CD4-positive, alpha-beta memory T cell (primary cell): ENCODE measurements at regions of chr14 and their contacts with region 1.

Region 1: DNA sequence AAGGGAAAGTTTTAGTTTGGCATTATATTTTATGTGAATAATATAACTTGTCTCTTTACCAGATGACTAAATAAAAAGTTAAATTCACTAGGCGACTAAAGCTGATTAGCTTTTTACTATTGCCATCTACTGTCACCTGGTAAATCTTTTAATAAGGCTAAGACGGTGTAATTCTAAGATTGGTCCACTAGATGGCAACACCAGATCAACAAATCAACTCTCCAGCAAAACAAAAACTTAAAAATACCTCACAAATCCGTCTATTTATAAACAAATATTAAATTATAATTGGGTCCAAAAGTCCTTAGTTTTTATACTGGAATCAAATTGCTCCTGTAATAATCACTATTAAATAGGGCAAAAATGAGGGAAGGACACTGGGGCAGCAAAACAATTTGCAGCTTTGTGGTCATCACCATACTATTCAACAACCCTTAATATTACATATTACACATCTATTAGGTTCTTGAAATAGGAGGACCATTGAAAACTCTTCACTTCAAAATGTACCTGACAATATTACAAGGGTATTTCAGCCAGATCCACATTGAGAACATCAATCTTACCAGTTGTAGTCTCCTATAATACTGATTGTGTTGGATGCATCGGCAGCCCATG is 47.9 kb downstream of the GALC start:
- DNase-seq: peak in 4 of 5 donors; percentile 49 to 56 (median 53)
- H3K4me3 ChIP-seq: no peak overlapping the region
- H3K4me3 Mint-ChIP-seq: no peak overlapping the region
- H3K27ac ChIP-seq: no peak overlapping the region
- H3K27ac Mint-ChIP-seq: no peak overlapping the region
- H3K4me1 ChIP-seq: peaks cover 13% of the 10 kb centered on the region
- H3K4me1 Mint-ChIP-seq: peaks cover 7 to 18% (median 12%) of the 10 kb centered on the region in 4 donors
- H3K27me3 ChIP-seq: no peaks in the 10 kb centered on the region
- H3K27me3 Mint-ChIP-seq: no peaks in the 10 kb centered on the region

Region 2: DNA sequence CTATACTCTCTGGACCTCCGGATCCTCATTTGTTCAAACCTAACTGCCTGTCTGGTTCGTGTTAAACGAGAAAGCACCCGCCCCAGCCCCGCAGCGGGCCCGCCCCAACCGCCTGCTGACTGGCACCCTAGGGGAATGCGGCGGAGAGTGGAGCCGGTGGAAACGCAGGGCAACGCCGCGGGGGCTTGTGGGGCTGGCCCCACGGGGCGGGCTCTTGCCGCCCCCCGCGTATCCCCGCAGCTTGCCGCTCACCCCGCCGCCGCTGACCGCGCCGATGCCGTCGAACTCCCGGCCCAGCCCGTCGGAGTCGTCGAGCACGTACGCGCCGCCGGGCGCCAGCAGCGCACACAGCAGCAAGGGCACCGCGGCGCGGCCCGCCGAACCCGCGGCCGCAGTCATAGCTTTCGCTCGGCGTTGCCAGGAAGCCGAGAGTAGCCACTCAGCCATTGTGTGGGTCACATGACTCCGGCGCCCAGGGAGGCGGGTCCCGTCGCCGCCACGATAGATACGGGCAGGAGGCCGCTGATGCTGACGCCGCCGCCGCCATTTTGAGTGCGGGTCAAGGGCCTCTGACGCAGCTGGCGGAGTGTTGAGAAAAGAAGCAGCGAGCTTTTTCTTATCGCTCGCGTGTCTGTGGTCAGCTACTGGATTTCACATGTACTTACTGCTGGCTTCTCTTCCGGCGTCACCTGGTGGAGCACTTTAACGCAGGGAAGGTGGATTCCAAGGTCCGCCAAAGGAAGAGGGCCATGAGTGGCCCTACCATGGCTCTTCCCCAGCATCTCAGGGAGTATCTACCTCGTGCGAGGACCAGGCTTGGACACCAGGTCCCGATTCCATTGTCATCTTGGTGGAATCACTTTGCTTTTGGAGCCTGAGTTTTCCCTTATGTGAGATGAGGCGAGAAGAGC is 47.9 kb after region 1 on chr14 and contains the start of gene GALC:
- CTCF ChIA-PET with region 1: interaction called, 33 read pairs
- POLR2A ChIA-PET with region 1: interaction called, 136 read pairs
- intact Hi-C with region 1: loop called (anchors 5 kb)
- DNase-seq: peak; percentile 95 to 97 (median 95)
- H3K4me3 ChIP-seq: peak within 1 kb of the TSS; percentile 58 to 80
- H3K4me3 Mint-ChIP-seq: peak within 1 kb of the TSS; percentile 91 to 99 (median 97)
- H3K27ac ChIP-seq: peak within 1 kb of the TSS; percentile 93
- H3K27ac Mint-ChIP-seq: peak within 1 kb of the TSS; percentile 98 to 100 (median 99)
- H3K4me1 ChIP-seq: peaks cover 61% of the 10 kb centered on the region
- H3K4me1 Mint-ChIP-seq: peaks cover 48 to 78% (median 62%) of the 10 kb centered on the region in 4 donors
- H3K27me3 ChIP-seq: no peaks in the 10 kb centered on the region
- H3K27me3 Mint-ChIP-seq: no peaks in the 10 kb centered on the region
- total RNA-seq, gene GALC: 26.6 to 28.7 TPM

Region 3: DNA sequence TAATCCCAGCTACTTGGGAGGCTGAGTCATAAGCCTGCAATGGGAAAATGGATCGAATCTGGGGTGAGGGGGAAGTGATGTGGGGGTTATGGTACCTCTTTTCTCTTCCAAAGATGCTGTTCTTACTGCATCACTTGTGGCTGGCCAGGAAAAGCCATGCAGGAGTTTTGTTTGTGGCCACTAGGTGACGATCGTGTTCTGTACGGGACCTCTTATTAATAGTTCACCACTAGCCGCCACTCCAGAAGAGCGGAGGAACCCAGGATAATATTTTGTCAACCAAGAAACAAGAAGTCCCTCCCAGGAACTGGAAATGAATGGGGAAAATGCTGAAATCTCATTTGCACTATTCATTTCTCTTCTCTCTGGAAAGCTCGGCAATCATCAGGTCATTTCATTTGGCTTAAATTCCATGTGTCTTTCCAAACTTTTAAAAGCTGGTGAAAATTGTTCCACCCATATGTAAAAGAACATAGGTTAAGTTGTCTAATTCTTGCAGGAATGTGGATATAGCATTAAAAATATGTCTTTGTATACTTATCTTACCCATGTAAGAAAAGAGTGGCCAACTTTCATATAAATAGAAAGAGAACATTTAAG is 68.8 kb after region 1 on chr14:
- CTCF ChIA-PET with region 1: interaction called, 52 read pairs
- POLR2A ChIA-PET with region 1: no interaction called
- intact Hi-C with region 1: no loop called
- DNase-seq: peak in 4 of 5 donors; percentile 29 to 46 (median 38)
- H3K4me3 ChIP-seq: no peak overlapping the region
- H3K4me3 Mint-ChIP-seq: peak overlapping the region in 6 of 8 donors; percentile 3 to 69 (median 44)
- H3K27ac ChIP-seq: no peak overlapping the region
- H3K27ac Mint-ChIP-seq: peak overlapping the region; percentile 9 to 91 (median 65)
- H3K4me1 ChIP-seq: peaks cover 59% of the 10 kb centered on the region
- H3K4me1 Mint-ChIP-seq: peaks cover 49 to 77% (median 64%) of the 10 kb centered on the region in 4 donors
- H3K27me3 ChIP-seq: no peaks in the 10 kb centered on the region
- H3K27me3 Mint-ChIP-seq: no peaks in the 10 kb centered on the region

Region 4: DNA sequence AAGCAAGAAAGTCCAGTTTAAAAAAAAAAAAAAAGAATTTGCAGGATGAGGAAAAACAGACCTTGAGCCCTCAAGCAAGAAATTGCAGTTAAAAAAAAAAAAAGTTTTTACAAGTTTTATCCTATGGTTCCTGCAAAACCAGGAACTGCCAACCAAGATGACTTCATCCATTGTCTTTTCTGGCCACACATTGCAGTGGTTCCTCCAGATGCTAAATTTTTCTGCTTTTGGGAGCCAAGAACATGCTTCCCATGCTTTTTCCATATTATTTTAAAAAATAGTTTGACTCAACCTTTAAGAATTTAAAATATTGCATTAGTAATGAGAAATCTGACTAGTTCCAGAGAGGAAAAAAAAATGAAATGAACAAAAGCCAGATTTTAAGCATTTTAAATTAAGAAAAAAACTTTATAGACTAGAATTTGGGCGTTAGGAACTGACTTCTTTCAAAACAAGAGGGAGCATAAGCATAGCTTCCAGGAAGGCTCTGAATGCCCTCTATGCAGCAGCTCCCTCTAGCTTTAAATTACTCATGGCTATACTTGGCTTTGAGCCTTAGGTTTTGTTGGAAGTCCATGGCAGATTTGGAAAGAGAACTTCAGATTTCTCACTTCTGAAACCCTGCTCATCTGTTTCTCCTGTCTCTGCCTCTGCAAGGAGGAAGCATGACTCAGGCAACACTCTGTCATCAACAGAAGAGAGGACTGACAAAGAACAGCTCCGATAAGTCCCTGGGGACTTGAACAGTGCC is 184.4 kb after region 1 on chr14:
- CTCF ChIA-PET with region 1: interaction called, 10 read pairs
- POLR2A ChIA-PET with region 1: no interaction called
- intact Hi-C with region 1: no loop called
- DNase-seq: no peak
- H3K4me3 ChIP-seq: no peak overlapping the region
- H3K4me3 Mint-ChIP-seq: peak overlapping the region in 7 of 8 donors; percentile 5 to 72 (median 55)
- H3K27ac ChIP-seq: no peak overlapping the region
- H3K27ac Mint-ChIP-seq: peak overlapping the region in 6 of 7 donors; percentile 60 to 85 (median 76)
- H3K4me1 ChIP-seq: peaks cover 32% of the 10 kb centered on the region
- H3K4me1 Mint-ChIP-seq: peaks cover 17 to 36% (median 24%) of the 10 kb centered on the region in 4 donors
- H3K27me3 ChIP-seq: no peaks in the 10 kb centered on the region
- H3K27me3 Mint-ChIP-seq: peaks cover 4 to 11% of the 10 kb centered on the region in 2 donors

Region 5: GRCh38 chr14:88189417-88190191 is 244.5 kb after region 1 on chr14:
- CTCF ChIA-PET with region 1: interaction called, 27 read pairs
- POLR2A ChIA-PET with region 1: no interaction called
- intact Hi-C with region 1: no loop called
- DNase-seq: peak in 4 of 5 donors; percentile 29 to 41 (median 36)
- H3K4me3 ChIP-seq: no peak overlapping the region
- H3K4me3 Mint-ChIP-seq: peak overlapping the region; percentile 47 to 84 (median 68)
- H3K27ac ChIP-seq: no peak overlapping the region
- H3K27ac Mint-ChIP-seq: peak overlapping the region in 1 of 7 donors; percentile 30
- H3K4me1 ChIP-seq: peaks cover 6% of the 10 kb centered on the region
- H3K4me1 Mint-ChIP-seq: peaks cover 3 to 8% (median 5%) of the 10 kb centered on the region in 4 donors
- H3K27me3 ChIP-seq: no peaks in the 10 kb centered on the region
- H3K27me3 Mint-ChIP-seq: peaks cover 15% of the 10 kb centered on the region in 2 donors

Region 6: DNA sequence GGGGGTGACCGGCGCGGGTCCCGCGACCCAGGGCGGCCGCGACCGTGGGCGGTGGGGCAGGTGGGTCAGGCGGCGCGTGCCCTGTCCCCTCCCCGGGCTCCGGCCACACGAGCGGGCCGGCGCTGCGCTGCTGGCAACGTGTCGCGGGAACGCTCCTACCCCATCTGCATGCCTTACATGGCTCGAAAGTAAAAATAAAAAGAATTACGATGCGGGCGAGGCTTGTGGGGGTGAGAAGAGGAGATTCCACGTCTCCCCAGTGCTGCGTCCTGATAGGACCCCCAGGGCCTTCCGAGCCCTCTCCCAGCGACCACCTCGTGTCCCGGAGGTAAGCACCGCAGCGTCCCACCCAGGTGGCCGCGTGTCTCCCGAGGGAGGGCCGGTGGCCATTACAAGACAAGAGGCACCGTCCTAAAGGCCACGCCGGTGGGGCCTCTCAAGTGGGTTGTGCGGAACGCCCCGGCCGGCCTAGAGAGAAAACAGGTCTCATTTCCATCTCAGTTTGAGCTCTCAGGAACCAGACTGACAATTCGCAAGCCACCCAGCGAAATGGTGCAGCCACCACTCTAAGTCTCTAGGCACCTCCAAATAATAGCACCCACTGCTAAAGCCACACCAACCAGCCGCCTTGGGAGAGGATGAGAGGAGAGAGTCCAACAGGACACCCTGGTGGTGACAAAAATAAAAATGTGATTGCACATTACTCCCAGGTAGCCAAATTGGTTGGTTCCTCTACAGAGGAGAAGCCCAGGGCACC is 1472.6 kb after region 1 on chr14:
- CTCF ChIA-PET with region 1: no interaction called
- POLR2A ChIA-PET with region 1: no interaction called
- intact Hi-C with region 1: no loop called
- DNase-seq: peak; percentile 61 to 76 (median 63)
- H3K4me3 ChIP-seq: peak overlapping the region in 1 of 2 donors; percentile 56
- H3K4me3 Mint-ChIP-seq: peak overlapping the region; percentile 86 to 94 (median 92)
- H3K27ac ChIP-seq: peak overlapping the region; percentile 66
- H3K27ac Mint-ChIP-seq: peak overlapping the region; percentile 88 to 96 (median 94)
- H3K4me1 ChIP-seq: peaks cover 22% of the 10 kb centered on the region
- H3K4me1 Mint-ChIP-seq: peaks cover 24 to 64% (median 43%) of the 10 kb centered on the region in 4 donors
- H3K27me3 ChIP-seq: no peaks in the 10 kb centered on the region
- H3K27me3 Mint-ChIP-seq: no peaks in the 10 kb centered on the region